HepG2 (cell line): ENCODE measurements at regions of chr5 and their contacts with region 1.

Region 1: DNA sequence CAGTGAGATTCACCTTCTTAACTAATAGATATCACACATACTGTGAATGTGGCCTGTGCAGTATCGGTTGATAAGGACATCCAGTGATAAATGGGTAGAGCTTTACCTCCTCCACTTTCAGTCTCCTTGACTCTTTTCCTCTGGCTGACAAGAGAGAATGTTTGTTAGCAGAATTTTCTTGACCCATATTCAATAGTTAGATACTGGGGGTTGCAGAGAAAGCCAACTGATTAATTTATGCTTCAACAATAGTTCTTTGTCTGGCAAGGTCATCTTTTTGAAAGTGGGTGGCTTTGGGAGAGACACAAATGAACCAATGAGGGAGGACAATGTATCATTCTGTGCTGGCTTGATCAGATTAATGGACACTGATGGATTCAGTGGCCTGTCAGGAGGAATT is 30.3 kb downstream of the TTC23L start:
- DNase-seq: no peak
- ATAC-seq: no peak
- H3K4me3 ChIP-seq: no peak overlapping the region
- H3K27ac ChIP-seq: no peak overlapping the region
- H3K4me1 ChIP-seq: peaks cover 49% of the 10 kb centered on the region
- H3K27me3 ChIP-seq: no peaks in the 10 kb centered on the region
- CTCF ChIP-seq: no peak
- EP300 ChIP-seq: no peak
- POLR2A ChIP-seq: no peak
- RAD21 ChIP-seq: no peak

Region 2: GRCh38 chr5:34499001-34499734 is 370.1 kb before region 1 on chr5:
- CTCF ChIA-PET with region 1: no interaction called
- POLR2A ChIA-PET with region 1: no interaction called
- in situ Hi-C with region 1: no loop called
- intact Hi-C with region 1: no loop called
- DNase-seq: no peak
- ATAC-seq: no peak; the same call in 2 of the 3 replicates
- H3K4me3 ChIP-seq: no peak overlapping the region
- H3K27ac ChIP-seq: no peak overlapping the region
- H3K4me1 ChIP-seq: peaks cover 64% of the 10 kb centered on the region
- H3K27me3 ChIP-seq: peaks cover 1 to 10% of the 10 kb centered on the region in 2 experiments; a peak in 3 of 5 replicates
- CTCF ChIP-seq: no peak
- EP300 ChIP-seq: no peak
- POLR2A ChIP-seq: no peak
- RAD21 ChIP-seq: no peak

Region 3: DNA sequence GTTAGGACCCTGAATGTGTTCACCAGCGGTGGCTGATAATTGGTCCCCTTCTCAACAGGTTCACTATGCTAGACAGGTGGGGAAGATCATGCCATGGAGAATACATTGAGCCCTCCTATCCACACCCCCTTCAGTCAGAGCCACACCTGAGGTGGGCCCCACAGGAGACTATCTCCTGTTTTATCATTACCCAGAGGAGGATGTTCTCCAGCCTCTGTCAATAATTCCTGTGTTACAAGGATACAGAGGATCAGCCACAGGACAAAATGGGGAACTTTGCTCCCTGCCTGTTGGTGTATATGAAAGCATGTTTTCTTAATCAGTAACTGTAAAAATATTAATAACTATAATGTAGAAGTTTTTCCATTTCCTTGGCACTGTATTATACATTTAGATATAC is 20.1 kb after region 1 on chr5:
- CTCF ChIA-PET with region 1: no interaction called
- POLR2A ChIA-PET with region 1: no interaction called
- in situ Hi-C with region 1: no loop called
- intact Hi-C with region 1: loop called (anchors 2 kb)
- DNase-seq: peak; percentile 68
- ATAC-seq: peak; percentile 97
- H3K4me3 ChIP-seq: no peak overlapping the region
- H3K27ac ChIP-seq: no peak overlapping the region
- H3K4me1 ChIP-seq: peaks cover 58% of the 10 kb centered on the region
- H3K27me3 ChIP-seq: no peaks in the 10 kb centered on the region
- CTCF ChIP-seq: no peak
- EP300 ChIP-seq: peak in 1 of 2 experiments; percentile 79; a peak in 2 of 4 replicates
- POLR2A ChIP-seq: no peak
- RAD21 ChIP-seq: no peak